Heart right ventricle (tissue), 16 donors: ENCODE measurements at regions of chr6 and their contacts with region 1.

Region 1: GRCh38 chr6:10528170-10528981 is 7.2 kb downstream of the GCNT2 start:
- DNase-seq: no peak
- ATAC-seq: peak; percentile 22 to 61 (median 34)
- H3K4me3 ChIP-seq: peak overlapping the region in 9 of 10 donors; percentile 13 to 58 (median 39)
- H3K27ac ChIP-seq: peak overlapping the region in 9 of 10 donors; percentile 29 to 79 (median 62)
- H3K4me1 ChIP-seq: peaks cover 0 to 60% (median 23%) of the 10 kb centered on the region in 9 donors
- H3K27me3 ChIP-seq: no peaks in the 10 kb centered on the region
- CTCF ChIP-seq: no peak

Region 2: DNA sequence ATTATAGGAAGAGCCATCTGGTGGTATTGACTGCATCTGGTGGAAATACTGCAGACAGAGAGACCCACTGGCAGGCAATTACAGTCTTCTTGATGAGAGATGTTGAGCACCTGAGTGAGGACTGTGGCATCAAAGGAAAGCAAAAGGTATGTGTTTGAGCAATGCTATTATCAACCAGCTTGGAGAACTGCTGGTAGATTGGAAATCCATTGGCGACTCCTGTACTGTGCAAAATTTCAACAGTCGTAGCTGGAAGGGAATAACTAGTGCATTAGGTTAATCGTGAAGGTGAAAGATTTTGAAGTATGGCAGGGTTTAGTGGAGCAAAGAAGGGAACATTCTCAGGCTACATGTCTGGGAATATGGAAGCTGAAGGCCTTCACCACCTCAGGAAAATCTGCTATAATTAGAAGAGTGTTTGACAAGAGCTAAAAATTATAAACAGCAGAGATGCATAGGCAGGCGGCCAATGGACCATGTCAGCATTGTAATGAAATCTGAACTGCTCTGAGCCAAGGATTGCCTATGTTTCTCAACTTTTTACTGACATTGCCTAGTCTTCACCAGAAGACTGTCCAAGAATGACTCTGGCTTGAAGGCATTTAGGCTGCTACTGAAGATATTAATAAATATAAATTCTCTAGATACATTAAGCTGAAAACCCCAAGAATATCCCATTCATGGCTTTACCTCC is 81.8 kb after region 1 on chr6:
- intact Hi-C with region 1: loop called in 1 of 10 experiments (anchors 10 kb)
- DNase-seq: peak; percentile 30 to 67
- ATAC-seq: peak; percentile 70 to 93 (median 81)
- H3K4me3 ChIP-seq: no peak overlapping the region
- H3K27ac ChIP-seq: peak overlapping the region; percentile 54 to 85 (median 77)
- H3K4me1 ChIP-seq: peaks cover 0 to 42% (median 12%) of the 10 kb centered on the region in 9 donors
- H3K27me3 ChIP-seq: no peaks in the 10 kb centered on the region
- CTCF ChIP-seq: no peak

Region 3: GRCh38 chr6:10626154-10626741 is 97.9 kb after region 1 on chr6:
- intact Hi-C with region 1: loop called in 1 of 10 experiments (anchors 10 kb)
- DNase-seq: no peak
- ATAC-seq: no peak
- H3K4me3 ChIP-seq: no peak overlapping the region
- H3K27ac ChIP-seq: no peak overlapping the region
- H3K4me1 ChIP-seq: peaks cover 0 to 5% (median 0%) of the 10 kb centered on the region in 9 donors
- H3K27me3 ChIP-seq: no peaks in the 10 kb centered on the region
- CTCF ChIP-seq: no peak

Region 4: GRCh38 chr6:10901770-10902169 is 373.4 kb after region 1 on chr6:
- intact Hi-C with region 1: no loop called
- DNase-seq: no peak
- ATAC-seq: peak in 5 of 8 donors; percentile 17 to 58 (median 35)
- H3K4me3 ChIP-seq: peak overlapping the region in 1 of 10 donors; percentile 24
- H3K27ac ChIP-seq: no peak overlapping the region
- H3K4me1 ChIP-seq: no peaks in the 10 kb centered on the region
- H3K27me3 ChIP-seq: no peaks in the 10 kb centered on the region
- CTCF ChIP-seq: no peak